ENCODE measurements at regions of chr6 and their contacts with region 1.

Region 1: DNA sequence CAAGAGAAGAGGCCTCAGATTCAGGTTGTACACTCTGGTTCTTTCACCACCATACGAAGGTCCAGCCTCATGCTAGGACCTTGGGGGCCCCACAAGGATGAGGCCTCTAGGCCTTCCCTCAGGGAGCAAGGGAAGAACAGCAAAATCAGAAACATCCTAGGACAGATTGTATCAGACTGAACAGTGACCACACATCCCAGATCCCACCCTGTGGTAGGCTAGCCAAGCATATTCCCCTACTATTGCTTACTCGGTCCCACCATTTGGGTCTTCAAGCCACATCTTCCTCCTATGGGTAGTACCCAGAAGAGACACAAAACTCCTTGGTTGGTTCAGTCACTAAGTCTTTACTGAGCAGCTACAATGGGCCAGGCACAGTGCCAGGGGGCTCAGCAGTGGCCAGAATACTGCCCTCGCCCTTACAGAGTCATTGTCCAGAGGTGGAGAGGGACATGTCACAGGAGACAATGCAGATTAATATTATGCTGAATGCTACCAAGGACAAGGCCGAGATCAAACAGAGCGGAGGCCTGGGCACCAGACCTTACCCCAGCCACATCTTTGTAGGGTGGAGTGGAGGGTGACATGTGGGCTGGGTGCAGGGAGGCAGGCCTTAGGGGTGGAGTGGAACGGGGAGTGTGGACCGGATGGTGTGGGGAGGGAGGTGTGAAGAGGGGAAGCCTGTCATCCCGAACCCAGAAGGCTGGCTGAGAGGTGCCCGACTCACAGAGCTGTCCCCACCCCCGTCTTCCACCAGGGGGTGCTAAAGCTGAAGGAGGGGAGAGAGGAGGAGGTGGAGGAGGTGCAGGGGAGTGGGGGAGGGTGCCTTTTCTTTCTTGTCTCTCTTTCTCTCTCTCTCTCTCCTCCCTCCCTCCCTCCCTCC is 6.8 kb upstream of the MAPK13 start:
- DNase-seq: peak; percentile 66 to 95 (median 76)

Region 2: DNA sequence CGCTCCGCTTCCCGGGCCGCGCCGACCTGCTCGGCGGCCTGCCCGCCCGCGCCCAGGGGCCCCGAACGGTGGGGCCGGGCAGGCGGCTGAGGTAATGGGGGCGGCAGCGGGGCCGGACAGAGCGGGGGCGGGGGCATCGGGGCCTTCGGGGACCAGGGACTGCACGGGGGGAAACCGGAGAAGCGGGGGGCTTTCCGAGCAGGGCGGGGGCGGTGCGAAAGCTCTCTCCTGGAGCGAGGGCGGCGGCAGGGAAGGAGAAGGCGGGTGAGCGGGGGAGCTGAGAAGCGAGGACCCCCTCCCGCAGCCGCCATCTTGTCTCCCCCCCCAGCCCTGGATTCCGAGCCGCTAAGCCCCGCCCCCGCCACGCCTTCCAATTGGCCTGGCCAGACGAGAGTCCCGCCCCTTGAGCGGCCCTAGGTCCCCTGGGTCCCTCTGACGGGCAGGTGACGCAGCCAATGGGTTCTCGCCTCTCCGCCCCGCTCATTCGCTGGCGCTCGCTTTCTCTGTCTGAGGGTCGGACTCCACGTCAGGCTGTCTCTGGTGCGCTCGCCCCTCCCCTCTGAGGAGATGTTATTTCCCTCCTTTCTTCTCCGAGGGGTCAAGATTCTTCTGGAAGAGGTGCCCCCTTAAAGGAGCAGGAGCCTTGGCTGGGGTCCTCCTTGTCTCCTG is 73.5 kb after region 1 on chr6:
- intact Hi-C with region 1: loop called (anchors 1 kb)
- DNase-seq: peak; percentile 98 to 100 (median 100)

Region 3: DNA sequence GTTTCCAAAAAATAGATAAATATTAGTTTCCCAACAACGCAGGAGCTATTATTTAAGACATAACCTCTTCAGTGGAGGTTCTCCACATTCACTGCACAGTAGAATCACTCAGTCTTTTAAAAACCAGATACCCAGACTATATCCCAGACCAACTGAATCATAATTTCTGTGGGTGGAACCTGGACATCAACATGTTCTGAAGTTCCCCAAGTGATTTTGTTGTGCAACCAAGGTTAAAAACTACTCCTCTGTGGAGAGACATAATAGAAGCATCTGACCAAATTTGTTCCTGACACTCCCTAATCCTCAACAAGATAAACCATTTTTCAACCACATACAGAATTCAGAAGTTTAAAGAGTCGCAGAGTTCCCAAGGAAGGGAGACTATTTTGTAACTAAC is 381.5 kb after region 1 on chr6:
- intact Hi-C with region 1: no loop called
- DNase-seq: no peak

Region 4: GRCh38 chr6:36559011-36559793 is 435.7 kb after region 1 on chr6:
- intact Hi-C with region 1: no loop called
- DNase-seq: no peak

Measured in posterior cingulate gyrus (tissue), 11 donors.